CD4-positive, alpha-beta T cell (primary cell): ENCODE measurements at regions of chr1 and their contacts with region 1.

Region 1: GRCh38 chr1:25669781-25670763 is 53.5 kb downstream of the MAN1C1 start:
- DNase-seq: no peak
- ATAC-seq: no peak
- H3K4me3 ChIP-seq: no peak overlapping the region
- H3K4me3 Mint-ChIP-seq: peak overlapping the region; percentile 21
- H3K27ac ChIP-seq: no peak overlapping the region
- H3K27ac Mint-ChIP-seq: peak overlapping the region; percentile 96
- H3K4me1 ChIP-seq: peaks cover 69% of the 10 kb centered on the region
- H3K4me1 Mint-ChIP-seq: peaks cover 95% of the 10 kb centered on the region
- H3K27me3 ChIP-seq: no peaks in the 10 kb centered on the region
- H3K27me3 Mint-ChIP-seq: no peaks in the 10 kb centered on the region
- CTCF ChIP-seq: no peak

Region 2: DNA sequence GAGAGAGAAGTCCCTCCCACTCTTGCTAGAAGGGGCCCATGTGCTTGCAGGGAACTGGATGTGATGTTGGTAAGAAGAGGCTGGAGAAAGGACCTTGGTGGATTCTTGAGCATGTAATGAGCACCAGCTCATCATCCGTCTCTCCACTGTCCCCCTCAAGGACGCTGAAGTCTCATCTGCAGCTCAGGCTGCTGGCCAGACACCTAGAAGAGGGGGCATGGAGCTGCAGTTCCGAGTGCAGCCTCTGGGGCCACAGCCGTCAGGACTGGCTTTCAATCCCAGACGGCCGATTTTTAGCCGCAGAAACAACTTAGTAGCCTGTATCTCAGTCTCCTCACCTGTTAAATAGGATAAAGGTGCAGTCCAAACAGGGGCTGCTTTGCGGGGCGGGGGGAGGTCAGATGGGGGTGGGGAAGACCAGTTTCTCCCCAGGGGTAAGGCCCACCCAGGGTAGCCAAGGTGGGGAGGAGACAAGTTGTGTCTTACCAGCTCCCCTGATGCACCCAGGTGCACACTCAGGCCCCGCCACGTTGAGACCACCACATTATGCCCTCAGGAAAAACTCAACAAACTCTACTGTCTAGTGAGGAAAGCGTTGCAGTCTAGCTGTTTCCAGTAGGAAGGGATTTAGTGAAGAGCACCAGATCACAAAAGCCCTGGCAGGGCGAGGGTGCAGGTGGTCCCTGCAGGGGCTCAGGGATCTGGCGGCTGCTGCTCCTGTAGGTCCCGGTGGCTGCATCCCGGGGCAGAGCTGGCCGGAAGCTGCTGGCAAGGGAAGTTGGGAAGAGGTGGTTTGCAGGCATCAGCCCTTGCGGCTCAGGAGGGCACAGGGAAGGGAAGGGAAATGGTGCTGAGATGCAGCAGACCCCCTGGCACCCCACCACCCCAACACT is 97.1 kb before region 1 on chr1:
- CTCF ChIA-PET with region 1: no interaction called
- POLR2A ChIA-PET with region 1: no interaction called
- intact Hi-C with region 1: no loop called
- DNase-seq: peak in 13 of 14 experiments; percentile 31 to 73 (median 42)
- ATAC-seq: peak; percentile 82
- H3K4me3 ChIP-seq: no peak overlapping the region
- H3K4me3 Mint-ChIP-seq: no peak overlapping the region
- H3K27ac ChIP-seq: peak overlapping the region in 1 of 2 donors; percentile 8
- H3K27ac Mint-ChIP-seq: peak overlapping the region; percentile 87
- H3K4me1 ChIP-seq: peaks cover 58% of the 10 kb centered on the region
- H3K4me1 Mint-ChIP-seq: peaks cover 55% of the 10 kb centered on the region
- H3K27me3 ChIP-seq: no peaks in the 10 kb centered on the region
- H3K27me3 Mint-ChIP-seq: no peaks in the 10 kb centered on the region
- CTCF ChIP-seq: peak; percentile 73

Region 3: DNA sequence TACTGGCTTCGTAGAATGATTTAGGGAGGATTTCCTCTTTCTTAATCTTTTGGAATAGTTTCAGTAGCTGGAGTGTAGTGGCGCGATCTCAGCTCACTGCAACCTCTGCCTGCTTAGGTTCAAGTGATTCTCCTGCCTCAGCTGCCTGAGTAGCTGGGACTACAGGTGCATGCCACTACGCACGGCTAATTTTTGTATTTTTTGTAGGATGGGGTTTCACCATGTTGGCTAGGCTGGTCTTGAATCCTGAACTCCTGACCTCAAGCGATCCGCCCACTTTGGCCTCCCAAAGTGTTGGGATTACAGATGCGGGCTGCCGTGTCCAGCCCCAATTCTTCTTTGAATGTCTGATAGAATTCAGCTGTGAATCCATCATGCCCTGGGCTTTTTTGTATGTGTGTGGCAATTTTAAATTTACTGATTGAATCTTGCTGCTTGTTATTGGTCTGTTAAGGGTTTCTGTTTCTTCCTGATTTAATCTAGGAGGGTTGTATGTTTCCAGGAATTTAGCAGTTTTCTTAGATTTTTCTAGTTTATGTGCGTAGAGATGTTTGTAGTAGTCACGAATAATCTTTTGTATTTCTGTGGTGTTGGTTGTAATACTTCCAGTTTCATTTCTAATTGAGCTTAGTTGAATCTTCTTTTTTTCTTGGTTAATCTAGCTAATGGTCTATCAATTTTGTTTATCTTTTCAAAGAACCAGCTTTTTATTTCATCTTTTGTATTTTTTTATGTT is 38.2 kb before region 1 on chr1:
- CTCF ChIA-PET with region 1: no interaction called
- POLR2A ChIA-PET with region 1: interaction called, 16 read pairs
- intact Hi-C with region 1: no loop called
- DNase-seq: peak in 1 of 14 experiments; percentile 38
- ATAC-seq: peak; percentile 16
- H3K4me3 ChIP-seq: peak overlapping the region; percentile 46
- H3K4me3 Mint-ChIP-seq: peak overlapping the region; percentile 87
- H3K27ac ChIP-seq: peak overlapping the region; percentile 57 to 63
- H3K27ac Mint-ChIP-seq: peak overlapping the region; percentile 88
- H3K4me1 ChIP-seq: peaks cover 26% of the 10 kb centered on the region
- H3K4me1 Mint-ChIP-seq: peaks cover 86% of the 10 kb centered on the region
- H3K27me3 ChIP-seq: no peaks in the 10 kb centered on the region
- H3K27me3 Mint-ChIP-seq: no peaks in the 10 kb centered on the region
- CTCF ChIP-seq: no peak

Region 4: GRCh38 chr1:25684216-25684965 is 14.3 kb after region 1 on chr1:
- CTCF ChIA-PET with region 1: no interaction called
- POLR2A ChIA-PET with region 1: interaction called, 6 read pairs
- intact Hi-C with region 1: loop called in 1 of 2 experiments (anchors 1 kb)
- DNase-seq: no peak
- ATAC-seq: no peak
- H3K4me3 ChIP-seq: no peak overlapping the region
- H3K4me3 Mint-ChIP-seq: no peak overlapping the region
- H3K27ac ChIP-seq: no peak overlapping the region
- H3K27ac Mint-ChIP-seq: peak overlapping the region; percentile 85
- H3K4me1 ChIP-seq: peaks cover 29% of the 10 kb centered on the region
- H3K4me1 Mint-ChIP-seq: peaks cover 87% of the 10 kb centered on the region
- H3K27me3 ChIP-seq: no peaks in the 10 kb centered on the region
- H3K27me3 Mint-ChIP-seq: no peaks in the 10 kb centered on the region
- CTCF ChIP-seq: no peak

Region 5: GRCh38 chr1:26053718-26054560 is 383.9 kb after region 1 on chr1:
- CTCF ChIA-PET with region 1: no interaction called
- POLR2A ChIA-PET with region 1: no interaction called
- intact Hi-C with region 1: no loop called
- DNase-seq: no peak
- ATAC-seq: no peak
- H3K4me3 ChIP-seq: no peak overlapping the region
- H3K4me3 Mint-ChIP-seq: no peak overlapping the region
- H3K27ac ChIP-seq: no peak overlapping the region
- H3K27ac Mint-ChIP-seq: no peak overlapping the region
- H3K4me1 ChIP-seq: no peaks in the 10 kb centered on the region
- H3K4me1 Mint-ChIP-seq: no peaks in the 10 kb centered on the region
- H3K27me3 ChIP-seq: peaks cover 11 to 15% of the 10 kb centered on the region in 2 experiments
- H3K27me3 Mint-ChIP-seq: peaks cover 61% of the 10 kb centered on the region
- CTCF ChIP-seq: no peak